ENCODE measurements at regions of chr6 and their contacts with region 1.

Region 1: DNA sequence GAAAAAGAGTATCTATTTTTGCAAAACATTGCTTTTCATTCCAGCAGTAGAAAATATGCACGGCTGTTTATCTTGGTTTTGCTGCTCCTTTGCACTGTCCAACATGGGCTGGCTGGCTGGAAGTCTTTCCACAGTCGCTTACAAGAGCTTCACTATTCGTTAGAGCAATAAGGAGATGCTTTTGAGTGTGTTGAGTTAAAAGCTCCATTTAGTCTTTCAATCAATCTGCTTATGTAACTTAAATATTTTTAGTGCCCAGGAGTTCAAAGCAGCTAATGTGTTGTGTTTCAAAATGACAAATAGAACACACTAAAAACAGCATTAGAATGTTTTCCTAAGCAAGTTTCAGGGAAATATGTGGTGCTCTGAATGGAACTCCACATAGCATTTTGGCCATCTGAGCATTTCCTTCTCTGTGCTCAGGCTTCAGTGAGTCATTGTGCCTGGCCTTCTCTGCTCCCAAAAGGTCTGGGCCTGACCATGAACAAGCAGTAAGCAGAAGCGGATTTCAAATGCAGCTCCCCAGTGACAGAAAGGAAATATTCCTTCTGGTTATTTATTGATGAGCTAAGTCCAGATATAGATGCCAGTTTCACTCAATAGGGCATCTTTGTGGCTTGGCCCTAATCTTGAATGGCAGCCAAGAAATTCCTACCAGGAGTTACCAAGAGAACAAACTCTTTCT is 580.3 kb downstream of the TENT5A start:
- DNase-seq: no peak
- H3K4me3 ChIP-seq: no peak overlapping the region
- H3K27ac ChIP-seq: peak overlapping the region; percentile 31
- H3K4me1 ChIP-seq: no peaks in the 10 kb centered on the region
- H3K27me3 ChIP-seq: no peaks in the 10 kb centered on the region
- CTCF ChIP-seq: no peak
- POLR2A ChIP-seq: no peak

Region 2: DNA sequence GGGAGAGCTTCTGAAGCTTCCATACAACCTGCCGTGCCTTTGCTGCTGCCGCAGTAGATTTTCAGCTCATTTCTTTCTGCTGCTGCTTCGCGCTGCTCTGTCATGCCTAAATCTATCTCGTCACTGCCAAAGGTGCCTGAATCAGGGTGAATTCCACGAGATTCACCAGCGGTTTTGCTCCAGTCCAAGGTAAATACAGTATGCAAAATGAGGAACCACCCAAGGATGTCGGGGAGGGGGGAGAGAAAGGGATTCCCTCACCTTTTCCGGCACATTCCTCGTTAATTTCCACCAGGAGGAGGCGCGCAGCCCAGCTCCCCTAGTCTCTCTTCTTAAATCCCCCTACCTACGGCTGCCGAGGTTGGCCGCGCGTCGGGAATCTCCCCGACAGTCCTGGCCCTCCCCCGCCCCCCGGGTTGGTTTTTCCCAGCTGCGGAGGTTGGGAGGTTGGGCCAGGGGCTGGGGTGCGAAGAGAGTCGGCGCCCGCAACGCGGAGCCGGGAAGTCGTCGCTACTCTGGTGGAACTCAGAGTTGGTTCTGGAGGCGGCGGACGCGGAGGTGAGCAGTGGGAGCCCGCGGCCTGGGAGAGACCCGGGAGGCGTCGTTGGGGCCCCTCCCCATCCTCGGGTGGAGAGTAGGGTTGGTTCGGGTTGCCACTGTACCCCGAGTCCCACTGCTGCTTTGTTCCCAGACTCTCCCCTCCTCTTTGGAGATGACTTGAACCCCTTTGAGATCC is 1191.3 kb after region 1 on chr6 and contains the start of gene TPBG:
- intact Hi-C with region 1: loop called (anchors 5 kb)
- DNase-seq: no peak
- H3K4me3 ChIP-seq: peak within 1 kb of the TSS; percentile 62 to 84
- H3K27ac ChIP-seq: peak within 1 kb of the TSS; percentile 86
- H3K4me1 ChIP-seq: peaks cover 16% of the 10 kb centered on the region
- H3K27me3 ChIP-seq: no peaks in the 10 kb centered on the region
- CTCF ChIP-seq: no peak
- POLR2A ChIP-seq: peak in 1 of 2 donors; percentile 41
- total RNA-seq, gene TPBG: 23.8 TPM

Measured in vagina (tissue), 2 donors.